ENCODE measurements at regions of chr15 and their contacts with region 1.

Region 1: GRCh38 chr15:40893733-40894688 is at the start of gene VPS18:
- DNase-seq: peak; percentile 97 to 99 (median 98)
- H3K4me3 ChIP-seq: peak within 1 kb of the TSS; percentile 96
- H3K4me3 Mint-ChIP-seq: peak within 1 kb of the TSS; percentile 92 to 100 (median 99)
- H3K27ac ChIP-seq: peak within 1 kb of the TSS; percentile 90
- H3K27ac Mint-ChIP-seq: peak within 1 kb of the TSS; percentile 83 to 99 (median 98)
- H3K4me1 ChIP-seq: peaks cover 19% of the 10 kb centered on the region
- H3K4me1 Mint-ChIP-seq: peaks cover 43 to 52% (median 43%) of the 10 kb centered on the region in 3 donors
- H3K27me3 ChIP-seq: no peaks in the 10 kb centered on the region
- H3K27me3 Mint-ChIP-seq: peaks cover 0 to 2% of the 10 kb centered on the region in 2 donors
- total RNA-seq, gene VPS18: 17.2 to 17.8 TPM

Region 2: GRCh38 chr15:40694688-40695468 is 199.1 kb before region 1 on chr15 and contains the start of gene RAD51:
- CTCF ChIA-PET with region 1: interaction called, 16 read pairs
- POLR2A ChIA-PET with region 1: interaction called, 6 read pairs
- DNase-seq: peak; percentile 86 to 94 (median 90)
- H3K4me3 ChIP-seq: peak within 1 kb of the TSS; percentile 96
- H3K4me3 Mint-ChIP-seq: peak within 1 kb of the TSS; percentile 92 to 99 (median 96)
- H3K27ac ChIP-seq: peak within 1 kb of the TSS; percentile 98
- H3K27ac Mint-ChIP-seq: peak within 1 kb of the TSS; percentile 91 to 99 (median 98)
- H3K4me1 ChIP-seq: peaks cover 8% of the 10 kb centered on the region
- H3K4me1 Mint-ChIP-seq: peaks cover 19 to 28% (median 20%) of the 10 kb centered on the region in 3 donors
- H3K27me3 ChIP-seq: no peaks in the 10 kb centered on the region
- H3K27me3 Mint-ChIP-seq: no peaks in the 10 kb centered on the region
- total RNA-seq, gene RAD51: 54.3 to 57.6 TPM

Region 3: DNA sequence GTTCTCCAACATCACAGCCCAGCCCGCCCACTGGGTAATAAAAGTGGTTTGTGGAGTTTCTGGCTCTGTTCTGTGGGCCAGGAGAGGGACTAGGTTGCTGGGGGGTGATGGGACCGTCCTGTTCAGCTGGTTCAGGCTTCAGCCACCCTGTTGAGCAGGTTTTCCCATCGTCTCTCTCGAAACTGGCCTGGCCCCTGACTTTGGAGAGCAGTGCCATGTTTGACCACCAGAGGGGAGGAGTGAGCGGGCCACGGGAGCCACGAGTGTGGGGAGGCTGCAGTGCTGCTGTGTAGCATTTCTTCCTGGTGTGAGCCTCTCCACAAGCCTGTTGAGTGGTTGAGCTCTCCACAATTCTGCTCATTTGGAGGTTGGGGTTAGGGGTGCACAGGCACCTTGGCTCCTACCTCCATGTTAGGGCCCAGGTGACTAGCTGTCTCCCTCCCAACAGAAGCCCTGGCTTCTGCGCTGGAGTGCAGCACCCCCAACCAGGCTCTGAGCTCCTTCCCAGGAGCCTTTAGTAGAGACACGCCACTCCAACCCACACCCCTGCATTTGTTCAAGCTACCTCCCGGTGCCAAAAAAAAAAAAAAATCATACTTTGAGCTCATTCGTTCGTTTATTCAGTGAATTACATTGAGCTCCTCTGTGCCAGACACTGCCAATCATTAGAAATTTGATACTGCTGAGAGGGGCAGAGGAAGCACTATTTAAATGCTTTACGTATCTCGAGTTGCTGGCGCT is 36.2 kb before region 1 on chr15:
- CTCF ChIA-PET with region 1: interaction called, 178 read pairs
- POLR2A ChIA-PET with region 1: interaction called, 20 read pairs
- DNase-seq: peak; percentile 65 to 83 (median 67)
- H3K4me3 ChIP-seq: no peak overlapping the region
- H3K4me3 Mint-ChIP-seq: no peak overlapping the region
- H3K27ac ChIP-seq: no peak overlapping the region
- H3K27ac Mint-ChIP-seq: peak overlapping the region in 3 of 8 donors; percentile 8 to 41 (median 24)
- H3K4me1 ChIP-seq: no peaks in the 10 kb centered on the region
- H3K4me1 Mint-ChIP-seq: peaks cover 6 to 15% (median 8%) of the 10 kb centered on the region in 3 donors
- H3K27me3 ChIP-seq: no peaks in the 10 kb centered on the region
- H3K27me3 Mint-ChIP-seq: peaks cover 2 to 11% of the 10 kb centered on the region in 2 donors

Region 4: DNA sequence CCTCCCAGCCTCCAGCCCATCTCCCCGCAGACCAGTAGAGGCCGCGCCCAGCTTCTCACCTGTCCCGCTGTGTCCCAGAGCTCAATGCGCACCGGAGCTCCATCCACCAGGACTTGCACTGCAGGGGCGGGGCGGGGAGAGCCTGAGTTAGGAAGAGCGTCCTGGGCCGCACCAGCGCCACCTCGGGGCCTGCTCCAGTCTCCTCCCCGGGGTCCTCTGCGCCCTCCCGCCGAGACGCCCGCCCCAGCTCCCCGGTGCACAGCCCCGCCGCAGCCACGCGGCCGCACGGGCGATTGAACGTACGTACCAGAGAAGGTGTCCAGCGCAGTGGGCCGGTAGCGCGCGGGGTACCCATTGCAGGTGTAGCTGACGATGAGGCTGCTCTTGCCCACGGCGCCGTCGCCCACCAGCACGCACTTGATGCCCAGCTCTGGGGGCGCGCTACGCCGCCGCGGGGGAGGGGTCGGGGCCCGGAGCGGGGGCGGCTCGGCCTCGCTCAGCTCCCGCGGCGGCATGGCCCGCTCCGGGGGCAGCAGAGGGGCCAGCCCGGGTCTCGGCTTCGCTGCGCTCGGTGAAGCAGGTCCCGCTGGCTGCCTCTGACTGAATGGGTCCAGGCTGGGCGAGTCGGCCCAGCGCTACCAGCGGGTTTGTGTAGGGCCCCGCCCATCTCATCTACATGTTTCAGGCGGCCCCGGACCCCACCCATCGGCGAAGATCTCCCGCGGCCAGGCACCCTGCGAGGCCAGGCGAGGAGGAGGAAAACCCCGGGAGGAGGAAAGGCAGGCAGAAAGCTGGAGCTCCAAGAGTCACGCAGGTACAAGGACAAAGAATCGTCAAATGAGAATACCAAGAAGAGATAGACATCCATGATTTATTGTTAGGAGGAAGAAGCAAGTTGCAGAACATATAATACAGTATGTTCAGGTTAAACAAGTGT is 20.1 kb before region 1 on chr15 and contains the start of gene RHOV:
- CTCF ChIA-PET with region 1: interaction called, 29 read pairs
- POLR2A ChIA-PET with region 1: interaction called, 4 read pairs
- DNase-seq: peak; percentile 31 to 61 (median 41)
- H3K4me3 ChIP-seq: peak within 1 kb of the TSS; percentile 65
- H3K4me3 Mint-ChIP-seq: peak within 1 kb of the TSS; percentile 83 to 96 (median 84)
- H3K27ac ChIP-seq: no peak within 1 kb of the TSS
- H3K27ac Mint-ChIP-seq: peak within 1 kb of the TSS in 1 of 8 donors; percentile 37
- H3K4me1 ChIP-seq: peaks cover 3% of the 10 kb centered on the region
- H3K4me1 Mint-ChIP-seq: peaks cover 5 to 8% (median 7%) of the 10 kb centered on the region in 3 donors
- H3K27me3 ChIP-seq: peaks cover 5% of the 10 kb centered on the region
- H3K27me3 Mint-ChIP-seq: peaks cover 8 to 9% of the 10 kb centered on the region in 2 donors
- total RNA-seq, gene RHOV: 0.24 to 0.40 TPM

Measured in CD8-positive, alpha-beta memory T cell (primary cell).